Activated T-helper 1 cell treated with anti-CD3 and anti-CD28 coated beads, Interleukin-12 subunit alpha, Interleukin-12 subunit beta, Interleukin-2, Interleukin-4 antibody, amounts not matched to agents 30 ng/mL and 10 ng/mL and 1 ng/mL, durations not matched to agents 14 hours and 24 hours and 36 hours (primary cell): ENCODE measurements at regions of chr15 and their contacts with region 1.

Region 1: GRCh38 chr15:36133742-36134141 is 445.7 kb upstream of the CDIN1 start:
- DNase-seq: no peak
- H3K4me3 Mint-ChIP-seq: no peak overlapping the region
- H3K27ac Mint-ChIP-seq: no peak overlapping the region
- H3K4me1 Mint-ChIP-seq: no peaks in the 10 kb centered on the region
- H3K27me3 Mint-ChIP-seq: no peaks in the 10 kb centered on the region

Region 2: DNA sequence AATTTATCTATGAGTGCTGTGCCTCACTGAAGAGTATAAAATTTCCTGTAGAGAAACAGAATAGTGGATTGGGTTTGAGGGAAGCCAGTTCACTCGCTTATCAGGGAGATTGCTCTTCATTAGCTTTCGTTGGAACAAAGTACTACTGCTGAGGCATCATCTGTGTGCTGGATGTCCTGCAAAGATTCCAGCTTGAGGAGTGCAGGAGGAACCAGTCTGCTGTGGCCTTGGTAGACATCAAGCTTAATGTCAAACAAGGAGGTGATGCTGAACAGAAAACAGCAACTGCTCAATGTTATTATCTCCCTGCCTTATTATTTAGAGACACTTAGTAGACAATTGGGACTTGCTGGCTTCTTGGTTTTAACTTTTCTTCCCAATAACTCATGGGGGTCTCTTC is 290.2 kb before region 1 on chr15:
- intact Hi-C with region 1: no loop called
- DNase-seq: no peak
- H3K4me3 Mint-ChIP-seq: no peak overlapping the region
- H3K27ac Mint-ChIP-seq: no peak overlapping the region
- H3K4me1 Mint-ChIP-seq: no peaks in the 10 kb centered on the region
- H3K27me3 Mint-ChIP-seq: no peaks in the 10 kb centered on the region

Region 3: GRCh38 chr15:36075333-36075732 is 58.4 kb before region 1 on chr15:
- intact Hi-C with region 1: loop called (anchors 10 kb)
- DNase-seq: no peak
- H3K4me3 Mint-ChIP-seq: no peak overlapping the region
- H3K27ac Mint-ChIP-seq: no peak overlapping the region
- H3K4me1 Mint-ChIP-seq: no peaks in the 10 kb centered on the region
- H3K27me3 Mint-ChIP-seq: no peaks in the 10 kb centered on the region

Region 4: GRCh38 chr15:36271048-36271447 is 137.3 kb after region 1 on chr15:
- intact Hi-C with region 1: no loop called
- DNase-seq: no peak
- H3K4me3 Mint-ChIP-seq: no peak overlapping the region
- H3K27ac Mint-ChIP-seq: no peak overlapping the region
- H3K4me1 Mint-ChIP-seq: no peaks in the 10 kb centered on the region
- H3K27me3 Mint-ChIP-seq: no peaks in the 10 kb centered on the region